IMR-90 (cell line): ENCODE measurements at regions of chr11 and their contacts with region 1.

Region 1: DNA sequence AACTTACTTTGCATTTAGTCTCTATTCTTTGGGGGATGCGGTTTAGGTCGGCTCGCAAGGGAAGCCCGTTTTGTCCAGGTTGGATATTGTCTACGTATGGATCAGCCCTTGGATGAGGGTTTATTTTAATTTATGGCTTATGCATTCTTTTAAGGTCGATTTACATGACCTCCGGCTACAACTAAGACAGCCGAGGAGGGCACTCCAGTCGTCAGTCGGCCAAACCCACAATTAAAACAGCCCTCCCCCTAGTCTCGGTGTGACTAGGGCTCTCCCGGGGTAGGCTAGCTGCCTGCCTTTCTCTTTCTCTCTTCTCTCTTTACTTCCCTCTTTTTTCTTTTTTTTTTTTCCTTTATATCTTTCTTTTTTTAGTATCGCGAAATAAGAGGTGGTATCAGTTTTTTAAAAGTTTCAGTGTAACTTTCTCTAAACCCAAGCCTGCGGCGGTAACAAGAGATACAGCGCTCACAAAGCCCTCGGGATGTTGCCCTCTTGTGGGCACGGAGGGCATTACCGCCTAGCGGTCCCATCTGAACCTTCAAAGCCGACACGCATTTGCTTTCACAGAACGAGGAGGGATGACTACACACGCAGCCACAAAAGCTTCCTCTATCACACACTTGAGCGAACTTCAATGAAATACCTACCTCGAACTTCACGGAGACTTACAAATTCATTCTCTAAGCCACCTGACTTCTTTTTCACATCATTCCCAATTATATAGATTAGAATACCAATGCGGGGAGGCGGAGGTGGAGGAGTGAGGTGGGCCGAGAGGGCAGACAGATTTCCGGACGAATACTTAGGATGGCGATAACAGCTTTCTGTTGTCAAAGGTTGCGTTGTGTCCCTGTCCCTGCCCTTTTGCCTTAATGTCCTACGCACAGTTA is 132.3 kb upstream of the C11orf58 start:
- DNase-seq: peak; percentile 96
- ATAC-seq: peak; percentile 40
- H3K4me3 ChIP-seq: peak overlapping the region; percentile 67
- H3K27ac ChIP-seq: peak overlapping the region; percentile 93
- H3K4me1 ChIP-seq: peaks cover 10% of the 10 kb centered on the region
- H3K27me3 ChIP-seq: no peaks in the 10 kb centered on the region
- CTCF ChIP-seq: peak; percentile 97
- POLR2A ChIP-seq: peak; percentile 23; the same call in 1 of the 2 replicates
- RAD21 ChIP-seq: peak; percentile 93

Region 2: DNA sequence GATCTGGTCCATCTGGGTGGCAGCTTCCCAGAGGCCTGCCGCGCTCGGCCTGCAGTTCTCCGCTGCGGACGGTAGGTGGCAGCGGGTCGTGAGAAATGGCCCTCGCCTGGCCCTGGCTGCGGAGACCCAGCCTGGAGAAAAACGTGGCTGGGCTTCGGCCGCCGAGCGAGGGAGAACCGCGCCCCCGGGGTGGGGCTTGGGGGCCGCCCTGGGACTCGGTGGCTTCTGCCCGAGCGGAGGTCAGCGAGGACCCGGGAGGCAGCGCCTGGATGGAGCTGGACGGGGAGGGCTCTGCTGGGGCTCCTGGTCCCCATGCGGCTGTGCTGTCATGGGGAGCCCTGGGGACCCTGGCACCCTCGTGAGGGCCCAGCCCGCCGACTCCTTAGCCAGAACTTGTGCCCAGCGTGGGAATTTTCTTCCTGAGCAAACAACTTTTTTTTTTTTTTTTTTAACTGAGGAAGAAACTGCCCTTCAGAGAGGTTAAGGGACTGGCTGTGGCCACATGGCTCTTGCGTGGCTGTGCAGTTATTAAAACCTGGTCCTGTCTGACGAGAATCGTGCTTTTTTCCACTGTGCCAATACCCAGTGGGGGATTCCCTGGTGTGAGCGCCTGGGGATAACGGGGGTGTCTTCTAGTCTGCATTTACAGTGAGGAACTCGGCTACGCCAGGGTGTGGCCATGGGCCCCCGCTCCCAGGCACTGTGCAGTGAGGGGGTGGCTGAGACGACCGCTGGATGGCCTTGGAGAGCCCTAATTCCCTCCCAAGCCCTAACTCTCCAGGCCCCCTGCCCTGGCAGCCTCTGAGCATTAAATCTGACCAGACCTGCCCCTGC is 955.8 kb before region 1 on chr11:
- CTCF ChIA-PET with region 1: no interaction called
- POLR2A ChIA-PET with region 1: no interaction called
- dilution Hi-C with region 1: no loop called
- in situ Hi-C with region 1: no loop called
- intact Hi-C with region 1: loop called (anchors 1 kb)
- DNase-seq: peak; percentile 87
- ATAC-seq: peak; percentile 98
- H3K4me3 ChIP-seq: peak overlapping the region; percentile 29; the same call in 1 of the 2 replicates
- H3K27ac ChIP-seq: peak overlapping the region; percentile 68
- H3K4me1 ChIP-seq: peaks cover 9% of the 10 kb centered on the region
- H3K27me3 ChIP-seq: no peaks in the 10 kb centered on the region; the same call in 1 of the 2 replicates
- CTCF ChIP-seq: peak; percentile 98
- POLR2A ChIP-seq: peak; percentile 56
- RAD21 ChIP-seq: peak; percentile 97

Region 3: GRCh38 chr11:15911377-15912044 is 694.6 kb before region 1 on chr11:
- CTCF ChIA-PET with region 1: no interaction called
- POLR2A ChIA-PET with region 1: no interaction called
- dilution Hi-C with region 1: no loop called
- in situ Hi-C with region 1: no loop called
- intact Hi-C with region 1: loop called (anchors 5 kb)
- DNase-seq: peak; percentile 74
- ATAC-seq: peak; percentile 56
- H3K4me3 ChIP-seq: no peak overlapping the region
- H3K27ac ChIP-seq: no peak overlapping the region
- H3K4me1 ChIP-seq: peaks cover 4% of the 10 kb centered on the region; the same call in 1 of the 2 replicates
- H3K27me3 ChIP-seq: no peaks in the 10 kb centered on the region; the same call in 1 of the 2 replicates
- CTCF ChIP-seq: no peak
- POLR2A ChIP-seq: no peak
- RAD21 ChIP-seq: no peak

Region 4: GRCh38 chr11:16001899-16002426 is 604.2 kb before region 1 on chr11:
- CTCF ChIA-PET with region 1: no interaction called
- POLR2A ChIA-PET with region 1: no interaction called
- dilution Hi-C with region 1: no loop called
- in situ Hi-C with region 1: no loop called
- intact Hi-C with region 1: loop called (anchors 2 kb)
- DNase-seq: peak; percentile 95
- ATAC-seq: peak; percentile 85
- H3K4me3 ChIP-seq: peak overlapping the region; percentile 35; the same call in 1 of the 2 replicates
- H3K27ac ChIP-seq: peak overlapping the region; percentile 40; the same call in 1 of the 2 replicates
- H3K4me1 ChIP-seq: peaks cover 9% of the 10 kb centered on the region
- H3K27me3 ChIP-seq: no peaks in the 10 kb centered on the region
- CTCF ChIP-seq: no peak
- POLR2A ChIP-seq: no peak
- RAD21 ChIP-seq: no peak

Region 5: GRCh38 chr11:16338393-16338792 is 267.7 kb before region 1 on chr11:
- CTCF ChIA-PET with region 1: no interaction called
- POLR2A ChIA-PET with region 1: no interaction called
- dilution Hi-C with region 1: no loop called
- in situ Hi-C with region 1: no loop called
- intact Hi-C with region 1: loop called (anchors 2 kb)
- DNase-seq: peak; percentile 91
- ATAC-seq: peak; percentile 78
- H3K4me3 ChIP-seq: no peak overlapping the region
- H3K27ac ChIP-seq: peak overlapping the region; percentile 53; the same call in 1 of the 2 replicates
- H3K4me1 ChIP-seq: no peaks in the 10 kb centered on the region
- H3K27me3 ChIP-seq: no peaks in the 10 kb centered on the region
- CTCF ChIP-seq: no peak
- POLR2A ChIP-seq: no peak
- RAD21 ChIP-seq: no peak

Region 6: DNA sequence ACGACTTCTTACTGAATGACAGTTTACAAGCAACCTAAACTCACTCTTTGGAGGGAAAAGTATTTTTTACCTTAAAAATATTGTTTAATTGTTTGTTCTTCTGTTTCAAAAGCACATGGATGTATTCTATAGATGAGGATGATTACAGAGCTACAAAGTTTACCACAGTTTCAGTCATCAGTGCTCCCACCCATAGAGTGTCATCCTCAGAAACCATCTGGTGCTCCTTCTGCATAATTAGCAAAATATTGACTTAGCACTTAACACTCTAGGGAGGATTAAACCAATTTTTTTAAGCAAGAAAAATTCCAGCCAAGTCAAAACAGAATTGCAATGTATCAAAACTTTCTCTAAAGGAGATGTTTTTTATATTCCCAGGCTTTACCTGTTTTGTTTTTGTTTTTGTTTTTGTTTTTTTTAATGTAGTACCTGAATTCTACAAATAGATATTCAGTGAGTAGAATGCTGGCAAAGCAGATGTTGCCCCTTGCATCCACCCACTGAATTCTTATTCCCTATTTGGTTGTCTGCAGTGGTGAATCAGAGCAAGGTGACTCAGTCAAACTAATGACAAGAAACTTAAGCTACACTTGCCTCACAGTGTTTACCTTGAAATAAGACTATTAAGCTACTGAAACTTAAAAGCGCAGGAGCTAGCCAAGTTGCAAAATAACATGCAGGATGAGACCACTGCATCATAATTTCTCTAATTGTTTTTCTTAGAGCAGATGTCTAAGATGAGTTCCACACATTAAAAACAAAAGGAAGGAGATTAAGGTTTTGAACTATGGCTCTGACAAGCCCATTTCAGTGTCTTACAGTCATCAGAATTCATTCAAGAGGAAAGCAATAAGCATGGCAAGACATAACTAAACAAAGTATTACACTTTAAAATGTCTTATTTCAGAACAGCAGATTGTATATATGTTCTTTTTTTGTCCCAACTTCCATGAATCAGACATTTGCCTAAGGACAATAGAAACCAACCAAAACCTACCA is 94.7 kb before region 1 on chr11:
- CTCF ChIA-PET with region 1: no interaction called
- POLR2A ChIA-PET with region 1: no interaction called
- dilution Hi-C with region 1: no loop called
- in situ Hi-C with region 1: no loop called
- intact Hi-C with region 1: loop called (anchors 5 kb)
- DNase-seq: peak; percentile 96
- ATAC-seq: peak; percentile 92
- H3K4me3 ChIP-seq: no peak overlapping the region
- H3K27ac ChIP-seq: peak overlapping the region; percentile 88; the same call in 1 of the 2 replicates
- H3K4me1 ChIP-seq: peaks cover 6% of the 10 kb centered on the region
- H3K27me3 ChIP-seq: no peaks in the 10 kb centered on the region
- CTCF ChIP-seq: no peak
- POLR2A ChIP-seq: no peak
- RAD21 ChIP-seq: no peak